ENCODE measurements at regions of chr14 and their contacts with region 1.

Region 1: GRCh38 chr14:74493343-74494261 is at the start of gene ISCA2:
- DNase-seq: peak; percentile 100
- H3K4me3 ChIP-seq: peak within 1 kb of the TSS; percentile 81
- H3K27ac ChIP-seq: peak within 1 kb of the TSS; percentile 54
- H3K4me1 ChIP-seq: peaks cover 52% of the 10 kb centered on the region
- H3K27me3 ChIP-seq: no peaks in the 10 kb centered on the region
- CTCF ChIP-seq: no peak
- total RNA-seq, gene ISCA2: 83.2 and 86.5 TPM in 2 replicates

Region 2: DNA sequence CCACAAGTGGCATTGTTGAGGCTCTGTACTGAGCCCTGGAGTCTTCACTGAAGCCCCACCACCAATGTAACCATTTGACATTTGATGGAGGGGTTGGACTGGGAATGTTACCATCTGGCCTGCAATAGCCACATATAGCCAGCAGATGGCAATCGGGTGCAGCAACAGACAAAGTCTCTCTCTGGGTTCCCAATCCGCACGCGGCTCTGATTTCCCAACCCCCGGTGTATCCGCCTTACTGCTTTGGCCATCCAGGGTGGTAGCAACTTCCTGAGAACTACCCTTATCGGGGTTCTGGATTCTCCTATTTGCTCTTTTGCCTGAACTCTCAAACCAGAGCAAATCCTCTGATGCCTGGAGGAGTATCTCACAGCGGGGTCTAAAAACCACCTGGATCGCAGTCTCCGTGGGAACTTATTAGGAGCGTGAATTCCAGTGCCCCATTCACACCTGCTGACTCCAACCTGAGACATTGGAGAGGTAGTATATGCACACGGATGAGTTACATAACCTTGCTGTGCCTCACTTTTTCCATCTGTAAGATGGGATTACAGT is 131.2 kb before region 1 on chr14:
- CTCF ChIA-PET with region 1: interaction called, 3 read pairs
- POLR2A ChIA-PET with region 1: no interaction called
- intact Hi-C with region 1: loop called (anchors 1 kb)
- DNase-seq: peak; percentile 72 to 92
- H3K4me3 ChIP-seq: no peak overlapping the region
- H3K27ac ChIP-seq: no peak overlapping the region
- H3K4me1 ChIP-seq: no peaks in the 10 kb centered on the region
- H3K27me3 ChIP-seq: no peaks in the 10 kb centered on the region
- CTCF ChIP-seq: peak; percentile 100

Region 3: GRCh38 chr14:74526854-74527575 is 33.4 kb after region 1 on chr14:
- CTCF ChIA-PET with region 1: no interaction called
- POLR2A ChIA-PET with region 1: interaction called, 24 read pairs
- intact Hi-C with region 1: no loop called
- DNase-seq: peak in 1 of 2 experiments; percentile 41
- H3K4me3 ChIP-seq: no peak overlapping the region
- H3K27ac ChIP-seq: no peak overlapping the region
- H3K4me1 ChIP-seq: no peaks in the 10 kb centered on the region
- H3K27me3 ChIP-seq: no peaks in the 10 kb centered on the region
- CTCF ChIP-seq: peak; percentile 41; the same call in 1 of the 2 replicates

Region 4: DNA sequence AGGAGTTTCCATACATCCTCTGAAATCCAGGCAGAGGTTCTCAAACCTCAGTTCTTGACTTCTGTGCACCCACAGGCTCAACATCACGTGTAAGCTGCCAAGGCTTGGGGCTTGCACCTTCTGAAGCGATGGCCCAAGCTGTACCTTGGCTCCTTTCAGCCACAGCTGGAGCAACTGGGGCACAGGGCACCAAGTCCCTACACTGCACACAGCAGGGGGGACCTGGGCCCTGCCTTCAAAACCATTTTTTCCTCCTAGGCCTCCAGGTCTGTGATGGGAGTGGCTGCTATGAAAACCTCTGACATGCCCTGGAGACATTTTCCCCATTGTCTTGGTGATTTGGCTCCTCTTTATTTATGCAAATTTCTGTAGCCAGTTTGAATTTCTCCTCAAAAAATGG is 208.7 kb after region 1 on chr14:
- CTCF ChIA-PET with region 1: no interaction called
- POLR2A ChIA-PET with region 1: no interaction called
- intact Hi-C with region 1: no loop called
- DNase-seq: no peak
- H3K4me3 ChIP-seq: no peak overlapping the region
- H3K27ac ChIP-seq: no peak overlapping the region
- H3K4me1 ChIP-seq: no peaks in the 10 kb centered on the region
- H3K27me3 ChIP-seq: no peaks in the 10 kb centered on the region
- CTCF ChIP-seq: no peak